ENCODE measurements at regions of chr17 and their contacts with region 1.

Region 1: GRCh38 chr17:20155258-20156195 is 146.4 kb downstream of the SPECC1 start:
- DNase-seq: peak; percentile 99
- H3K4me3 ChIP-seq: peak overlapping the region; percentile 59 to 82 (median 66)
- H3K27ac ChIP-seq: peak overlapping the region; percentile 84 to 92 (median 86)
- H3K4me1 ChIP-seq: peaks cover 0 to 30% (median 13%) of the 10 kb centered on the region in 4 donors
- H3K27me3 ChIP-seq: no peaks in the 10 kb centered on the region
- CTCF ChIP-seq: no peak
- EP300 ChIP-seq: no peak
- POLR2A ChIP-seq: peak; percentile 86

Region 2: DNA sequence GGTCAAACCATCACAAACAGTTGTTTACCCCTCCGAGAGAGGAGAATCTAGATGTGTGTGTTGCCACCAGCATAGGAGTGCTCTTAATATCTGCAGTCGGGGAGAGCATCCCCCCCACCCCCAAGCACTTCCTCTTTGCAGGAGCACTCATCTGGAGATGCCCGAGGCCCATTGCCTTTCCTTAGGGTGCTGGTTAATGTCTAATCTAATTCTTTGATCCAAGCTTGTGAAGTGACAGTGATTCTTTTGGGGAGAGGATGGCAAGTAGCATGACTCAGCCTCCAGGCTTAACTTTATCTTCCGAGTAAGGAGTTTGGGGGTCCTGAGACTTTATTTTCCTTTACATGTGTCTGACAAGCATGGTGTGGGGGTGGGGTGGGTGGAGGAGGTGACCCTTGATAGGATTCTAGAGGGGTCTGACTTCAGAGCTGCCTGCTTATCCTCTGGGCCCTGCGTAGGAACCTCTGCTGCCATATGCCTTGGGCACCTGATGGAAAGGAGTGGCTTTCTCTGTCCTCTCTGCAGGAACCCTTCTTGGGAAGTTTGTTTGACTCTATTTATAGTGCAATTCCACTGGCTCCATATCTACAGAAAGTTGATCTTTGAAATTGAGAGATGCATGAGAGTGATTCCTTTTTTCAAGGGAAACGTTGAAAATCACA is 60.8 kb after region 1 on chr17:
- in situ Hi-C with region 1: loop called in 1 of 4 experiments (anchors 10 kb)
- intact Hi-C with region 1: no loop called
- DNase-seq: no peak
- H3K4me3 ChIP-seq: no peak overlapping the region
- H3K27ac ChIP-seq: no peak overlapping the region
- H3K4me1 ChIP-seq: peaks cover 0 to 11% (median 0%) of the 10 kb centered on the region in 4 donors
- H3K27me3 ChIP-seq: no peaks in the 10 kb centered on the region
- CTCF ChIP-seq: no peak
- EP300 ChIP-seq: no peak
- POLR2A ChIP-seq: no peak

Measured in transverse colon (tissue), 4 donors.